ENCODE measurements at regions of chr20 and their contacts with region 1.

Region 1: GRCh38 chr20:431012-431904 is 23.2 kb downstream of the RBCK1 start:
- DNase-seq: peak; percentile 65
- H3K4me3 Mint-ChIP-seq: no peak overlapping the region
- H3K27ac Mint-ChIP-seq: peak overlapping the region; percentile 91
- H3K4me1 Mint-ChIP-seq: peaks cover 43% of the 10 kb centered on the region
- H3K27me3 Mint-ChIP-seq: no peaks in the 10 kb centered on the region

Region 2: GRCh38 chr20:354298-355064 is 76.8 kb before region 1 on chr20:
- CTCF ChIA-PET with region 1: interaction called, 10 read pairs
- POLR2A ChIA-PET with region 1: no interaction called
- intact Hi-C with region 1: loop called (anchors 1 kb)
- DNase-seq: peak; percentile 87
- H3K4me3 Mint-ChIP-seq: no peak overlapping the region
- H3K27ac Mint-ChIP-seq: no peak overlapping the region
- H3K4me1 Mint-ChIP-seq: no peaks in the 10 kb centered on the region
- H3K27me3 Mint-ChIP-seq: no peaks in the 10 kb centered on the region

Region 3: DNA sequence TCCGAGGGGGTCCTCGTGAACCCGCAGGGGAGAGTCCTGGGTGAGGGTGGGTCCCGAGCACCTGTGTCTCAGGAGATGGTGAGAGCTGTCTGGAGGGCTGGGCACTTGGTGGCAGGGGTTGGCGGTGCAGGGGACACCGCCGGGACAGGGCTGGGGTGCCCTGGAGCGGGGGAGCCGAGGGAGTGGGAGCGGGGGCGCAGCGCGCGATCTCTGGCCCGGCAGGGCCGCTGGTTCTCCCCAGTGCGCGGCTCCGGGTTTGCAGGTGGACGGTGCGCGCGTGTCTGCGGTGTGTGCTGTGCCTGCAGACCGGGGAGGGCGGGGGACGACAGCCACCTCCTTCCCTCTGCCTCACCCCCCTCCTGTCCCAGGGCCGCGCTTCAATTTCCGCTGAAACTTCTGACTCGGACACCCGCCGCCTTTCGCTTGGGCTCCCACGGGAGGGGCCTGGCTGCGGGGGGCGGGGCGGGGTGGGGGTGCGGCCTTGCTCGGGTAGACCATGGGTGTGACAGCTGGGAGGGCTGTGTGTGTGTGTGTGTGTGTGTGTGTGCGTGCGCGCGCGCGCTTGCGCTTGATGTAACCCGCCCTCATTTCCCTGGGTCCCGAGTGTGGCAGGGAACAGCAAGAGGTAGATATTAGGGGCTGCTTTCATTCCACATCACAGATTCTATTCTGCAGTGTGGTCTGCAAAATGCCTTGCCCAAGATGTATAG is 49.5 kb before region 1 on chr20:
- CTCF ChIA-PET with region 1: interaction called, 3 read pairs
- POLR2A ChIA-PET with region 1: interaction called, 6 read pairs
- intact Hi-C with region 1: loop called (anchors 5 kb)
- DNase-seq: peak; percentile 89
- H3K4me3 Mint-ChIP-seq: peak overlapping the region; percentile 76
- H3K27ac Mint-ChIP-seq: peak overlapping the region; percentile 84
- H3K4me1 Mint-ChIP-seq: peaks cover 13% of the 10 kb centered on the region
- H3K27me3 Mint-ChIP-seq: no peaks in the 10 kb centered on the region

Region 4: GRCh38 chr20:462199-462991 is 31.1 kb after region 1 on chr20 and contains the start of gene TBC1D20:
- CTCF ChIA-PET with region 1: interaction called, 5 read pairs
- POLR2A ChIA-PET with region 1: no interaction called
- intact Hi-C with region 1: loop called (anchors 1 kb)
- DNase-seq: peak; percentile 88
- H3K4me3 Mint-ChIP-seq: peak within 1 kb of the TSS; percentile 86
- H3K27ac Mint-ChIP-seq: peak within 1 kb of the TSS; percentile 84
- H3K4me1 Mint-ChIP-seq: peaks cover 38% of the 10 kb centered on the region
- H3K27me3 Mint-ChIP-seq: no peaks in the 10 kb centered on the region
- total RNA-seq, gene TBC1D20: 18.8 to 20.4 TPM

Region 5: GRCh38 chr20:478949-479429 is 47.7 kb after region 1 on chr20:
- CTCF ChIA-PET with region 1: interaction called, 5 read pairs
- POLR2A ChIA-PET with region 1: no interaction called
- intact Hi-C with region 1: loop called (anchors 2 kb)
- DNase-seq: no peak
- H3K4me3 Mint-ChIP-seq: no peak overlapping the region
- H3K27ac Mint-ChIP-seq: no peak overlapping the region
- H3K4me1 Mint-ChIP-seq: peaks cover 12% of the 10 kb centered on the region
- H3K27me3 Mint-ChIP-seq: no peaks in the 10 kb centered on the region

Measured in activated CD4-positive, alpha-beta memory T cell treated with anti-CD3 and anti-CD28 coated beads for 36 hours (primary cell).